ENCODE measurements at regions of chr3 and their contacts with region 1.

Region 1: DNA sequence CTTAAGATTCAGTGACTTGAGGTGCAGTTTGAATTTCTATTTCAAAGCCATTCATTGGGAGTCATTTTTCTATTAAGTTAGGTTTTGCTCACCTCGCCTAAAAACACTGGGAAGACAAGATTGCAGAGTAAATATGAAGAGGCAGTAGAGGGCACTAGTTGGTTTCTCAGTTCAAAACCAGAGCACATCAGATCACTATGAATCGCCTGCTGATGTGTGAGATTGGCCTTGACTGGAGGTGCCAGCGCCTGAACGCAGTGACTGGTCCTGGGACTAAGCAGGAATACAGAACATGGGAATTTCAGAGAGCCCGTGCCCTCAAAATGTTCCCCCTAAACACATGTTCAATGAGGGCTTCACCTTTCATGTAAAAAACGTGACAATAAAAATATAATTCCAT is 229.0 kb downstream of the ITPR1 start:
- DNase-seq: no peak
- H3K4me3 ChIP-seq: no peak overlapping the region
- CTCF ChIP-seq: peak; percentile 44

Region 2: DNA sequence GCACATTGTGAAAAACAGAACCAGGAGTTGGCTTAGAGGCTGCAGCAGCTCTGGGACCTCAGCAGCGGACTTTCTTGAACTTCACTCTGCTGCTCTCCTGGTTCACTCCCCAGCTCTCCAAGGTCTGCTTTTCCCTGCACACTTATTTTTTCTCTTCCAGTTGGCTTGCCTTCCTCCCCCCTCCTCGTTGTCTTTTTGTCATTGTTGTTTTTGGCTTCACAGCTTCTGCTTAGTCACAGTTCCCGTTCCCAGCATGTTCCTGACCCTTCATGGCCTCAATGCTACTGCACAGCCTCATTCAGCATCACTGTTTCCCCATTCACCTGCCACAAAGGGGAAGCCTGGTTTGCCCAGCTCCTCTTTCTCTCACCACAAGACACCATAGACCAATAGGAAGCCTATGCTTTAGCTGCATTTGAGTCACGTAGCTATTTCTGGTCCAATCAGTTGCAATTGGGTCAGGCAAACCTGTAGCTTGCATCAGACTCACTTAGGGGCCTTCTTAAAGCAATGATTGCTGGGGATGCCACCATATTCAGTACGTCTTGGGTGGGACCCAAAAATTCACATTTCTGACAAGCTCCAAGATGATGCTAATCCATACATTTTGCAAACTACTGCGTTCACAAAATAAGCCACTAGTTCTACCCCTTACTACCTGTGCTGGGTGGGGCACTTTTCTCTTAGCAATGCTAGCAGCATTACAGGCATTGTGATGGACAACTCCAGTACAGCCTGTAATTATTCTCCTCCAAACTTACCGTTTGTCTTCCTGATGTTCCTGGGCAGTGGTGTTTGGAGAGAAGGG is 247.2 kb before region 1 on chr3:
- CTCF ChIA-PET with region 1: no interaction called
- POLR2A ChIA-PET with region 1: no interaction called
- DNase-seq: no peak
- H3K4me3 ChIP-seq: no peak overlapping the region
- CTCF ChIP-seq: no peak

Region 3: GRCh38 chr3:4845882-4846281 is 123.8 kb after region 1 on chr3:
- CTCF ChIA-PET with region 1: no interaction called
- POLR2A ChIA-PET with region 1: no interaction called
- DNase-seq: no peak
- H3K4me3 ChIP-seq: no peak overlapping the region
- CTCF ChIP-seq: no peak

Region 4: DNA sequence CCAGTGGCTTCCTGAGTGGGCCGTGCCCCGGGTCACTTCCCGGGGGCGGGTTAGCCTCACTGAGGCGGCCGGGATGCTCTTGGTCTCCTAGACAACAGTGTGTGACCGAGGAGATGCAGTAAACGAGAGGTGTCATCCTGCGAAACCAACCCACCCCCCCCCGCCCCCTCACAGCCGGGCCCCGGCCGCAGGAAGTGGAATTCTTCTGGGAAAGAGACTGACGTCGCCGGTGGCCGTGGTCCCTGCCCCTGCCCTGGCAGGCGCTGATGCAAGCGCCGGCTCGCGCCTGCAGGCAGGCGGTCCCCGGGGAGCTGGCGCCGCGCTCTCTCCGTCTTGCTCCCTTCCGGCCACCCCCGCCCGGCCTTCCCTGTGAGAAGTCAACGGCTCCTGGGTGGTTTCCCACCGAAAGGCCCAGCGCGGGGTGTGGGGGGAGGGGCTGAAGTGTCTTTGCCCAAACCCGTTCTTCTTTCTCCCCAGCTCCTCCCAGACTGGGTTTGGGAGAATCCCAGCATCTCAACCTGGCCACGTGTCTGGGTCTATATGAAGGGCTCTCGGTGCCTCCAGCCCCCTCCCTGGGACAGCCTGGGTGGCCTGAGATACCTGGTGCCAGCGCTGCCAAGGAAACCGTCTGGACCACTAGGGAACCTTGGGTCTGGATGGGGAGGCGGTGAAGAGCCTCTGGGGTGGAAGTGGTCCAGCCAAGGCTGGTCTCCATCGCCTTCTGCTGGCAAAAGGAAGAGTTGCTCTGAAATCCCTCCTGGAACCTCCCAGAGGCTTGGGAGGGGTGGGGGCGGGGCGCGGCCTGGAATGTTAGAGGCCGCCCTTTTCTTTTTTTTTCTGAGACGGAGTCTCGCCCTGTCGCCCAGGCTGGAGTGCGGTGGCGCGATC is 304.5 kb after region 1 on chr3:
- CTCF ChIA-PET with region 1: interaction called, 215 read pairs
- POLR2A ChIA-PET with region 1: interaction called, 7 read pairs
- DNase-seq: peak; percentile 67
- H3K4me3 ChIP-seq: peak overlapping the region; percentile 59
- CTCF ChIP-seq: peak; percentile 84

Measured in AG04449 (cell line).